ENCODE measurements at regions of chr16 and their contacts with region 1.

Region 1: GRCh38 chr16:89031715-89032659 is 55.0 kb upstream of the CBFA2T3 start:
- DNase-seq: peak; percentile 71
- ATAC-seq: peak; percentile 97
- H3K4me3 ChIP-seq: peak overlapping the region; percentile 0; the same call in 1 of the 2 replicates
- H3K27ac ChIP-seq: peak overlapping the region; percentile 76
- H3K4me1 ChIP-seq: peaks cover 12% of the 10 kb centered on the region
- H3K27me3 ChIP-seq: no peaks in the 10 kb centered on the region
- CTCF ChIP-seq: no peak
- EP300 ChIP-seq: no peak
- POLR2A ChIP-seq: no peak
- RAD21 ChIP-seq: peak; percentile 15; the same call in 1 of the 2 replicates

Region 2: DNA sequence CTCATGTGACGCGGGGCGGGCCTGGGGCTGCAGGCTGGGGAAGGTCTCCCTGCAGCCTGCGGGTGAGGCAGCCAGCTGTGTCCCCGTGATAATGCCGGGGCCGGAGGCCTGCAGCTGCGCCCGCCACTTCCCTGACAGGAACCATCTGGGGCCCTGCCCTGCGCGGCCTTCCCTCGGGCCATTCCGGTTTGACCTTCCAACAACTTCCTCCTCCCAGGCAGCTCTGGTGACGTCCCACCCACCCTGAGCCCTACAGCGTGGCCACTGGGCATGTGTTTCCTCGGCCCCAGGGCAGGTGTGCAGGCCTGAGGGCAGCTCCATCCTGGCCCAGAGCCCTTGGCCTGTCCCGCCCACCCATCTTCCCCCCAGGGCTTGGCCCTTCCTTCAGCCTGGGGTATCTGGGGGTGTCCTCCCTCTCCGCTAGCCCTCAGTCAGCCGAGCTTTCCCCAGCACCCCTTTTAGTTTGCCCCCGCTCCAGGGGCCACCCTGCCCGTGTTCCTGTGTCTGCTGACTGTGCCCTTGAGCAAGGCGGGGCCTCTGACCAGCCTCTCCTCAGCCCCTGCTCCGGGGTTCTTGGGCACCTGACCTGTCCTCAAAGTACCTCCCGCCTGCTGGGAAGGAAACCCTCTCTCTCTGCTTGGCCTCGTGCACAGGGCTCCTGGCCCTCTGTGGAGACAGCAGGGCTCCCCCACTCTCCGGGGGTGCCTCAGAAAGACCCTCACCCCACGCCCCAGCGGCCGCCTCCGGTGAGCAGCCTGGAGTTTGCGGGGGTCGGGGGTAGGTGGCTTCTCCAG is 54.8 kb before region 1 on chr16 and contains the start of gene CBFA2T3:
- CTCF ChIA-PET with region 1: no interaction called
- POLR2A ChIA-PET with region 1: interaction called, 5 read pairs
- RAD21 ChIA-PET with region 1: interaction called, 4 read pairs
- SMC1A ChIA-PET with region 1: interaction called, 3 read pairs
- in situ Hi-C with region 1: no loop called
- intact Hi-C with region 1: loop called (anchors 5 kb)
- DNase-seq: no peak
- ATAC-seq: peak; percentile 32
- H3K4me3 ChIP-seq: peak within 1 kb of the TSS; percentile 93
- H3K27ac ChIP-seq: peak within 1 kb of the TSS; percentile 98
- H3K4me1 ChIP-seq: peaks cover 51% of the 10 kb centered on the region
- H3K27me3 ChIP-seq: no peaks in the 10 kb centered on the region
- CTCF ChIP-seq: no peak
- EP300 ChIP-seq: no peak
- POLR2A ChIP-seq: no peak
- RAD21 ChIP-seq: no peak
- polyA plus RNA-seq, gene CBFA2T3: 0.69 to 1.5 TPM